RWPE1 (cell line): ENCODE measurements at regions of chr7 and their contacts with region 1.

Region 1: DNA sequence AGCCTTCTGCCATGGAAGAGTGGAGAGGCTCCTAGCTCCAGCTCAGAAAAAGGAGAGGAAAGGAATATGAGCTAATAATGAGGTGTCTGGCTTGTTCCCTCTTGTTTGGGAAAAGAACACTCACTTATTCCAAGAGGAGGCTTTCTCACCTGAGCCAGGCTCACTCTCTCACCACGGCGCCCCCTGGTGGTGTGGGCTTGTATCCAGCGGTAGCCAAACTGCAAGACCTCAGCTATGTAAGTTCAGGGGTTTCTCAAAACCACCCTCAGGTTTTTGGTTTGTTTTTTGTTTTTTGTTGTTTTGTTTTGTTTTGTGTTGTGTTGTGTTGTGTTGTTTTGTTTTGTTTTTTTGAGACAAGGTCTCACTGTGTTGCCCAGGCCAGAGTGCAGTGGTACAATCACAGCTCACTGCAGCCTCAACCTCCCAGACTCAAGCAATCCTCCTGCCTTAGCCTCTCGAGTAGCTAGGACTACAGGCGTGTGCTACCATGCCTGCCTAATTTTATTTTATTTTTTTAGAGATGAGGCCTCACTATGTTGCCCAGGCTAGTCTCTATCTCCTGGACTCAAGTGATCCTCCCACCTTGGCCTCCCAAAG is 124.0 kb downstream of the TMEM130 start:
- DNase-seq: peak; percentile 80
- H3K27ac ChIP-seq: no peak overlapping the region
- CTCF ChIP-seq: peak; percentile 95

Region 2: DNA sequence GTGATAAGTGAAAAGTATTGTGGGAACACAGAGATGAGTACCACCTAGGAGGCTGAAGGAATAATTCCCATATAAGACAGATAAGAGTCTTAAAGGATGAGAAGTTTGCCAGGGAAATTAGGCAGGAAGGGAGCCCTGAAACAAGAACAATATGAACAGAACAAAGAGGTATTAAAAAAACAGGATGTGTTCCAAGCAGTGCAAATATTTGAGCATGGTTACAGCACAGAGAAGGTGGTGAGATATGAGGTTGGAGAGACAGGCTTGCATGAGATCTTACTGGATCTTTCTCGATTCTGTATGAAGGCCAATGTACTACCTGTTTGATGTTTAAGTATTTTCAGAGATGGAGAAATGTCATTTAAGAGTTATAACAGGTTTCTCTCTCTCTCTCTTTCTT is 993.6 kb before region 1 on chr7:
- CTCF ChIA-PET with region 1: no interaction called
- POLR2A ChIA-PET with region 1: no interaction called
- DNase-seq: no peak
- H3K27ac ChIP-seq: no peak overlapping the region
- CTCF ChIP-seq: no peak

Region 3: DNA sequence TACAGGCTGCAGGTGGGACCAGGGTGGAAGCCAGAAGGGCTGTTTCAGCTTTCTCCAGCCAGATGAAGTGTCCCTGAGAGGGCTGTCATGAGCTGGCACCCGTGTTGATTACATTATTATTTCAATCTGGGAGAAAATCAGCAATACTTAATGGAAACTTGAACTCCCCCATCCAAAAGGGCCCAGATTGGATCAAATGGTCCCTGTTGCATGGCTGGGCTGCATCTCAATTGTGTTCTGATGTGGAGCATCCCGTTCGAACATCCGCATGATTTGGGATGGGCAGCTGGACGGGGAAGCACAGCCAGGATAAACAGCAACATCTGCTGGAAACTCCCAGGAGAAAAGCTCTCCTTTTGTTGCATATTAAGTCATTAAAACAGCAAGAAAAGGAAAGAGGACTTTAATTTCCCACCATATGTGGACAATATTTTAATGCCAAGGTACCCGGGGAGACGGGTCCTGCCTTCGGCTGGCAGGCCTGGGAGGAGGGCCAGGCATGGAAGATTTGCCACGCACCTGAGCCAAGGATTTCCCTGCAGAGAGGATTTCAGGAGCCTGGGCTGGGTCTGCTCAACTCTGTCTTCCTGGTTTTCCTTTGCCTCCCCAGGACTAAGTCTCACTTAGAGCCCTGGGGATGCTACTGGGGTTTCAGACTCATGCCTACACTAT is 76.4 kb before region 1 on chr7:
- CTCF ChIA-PET with region 1: no interaction called
- POLR2A ChIA-PET with region 1: no interaction called
- DNase-seq: no peak
- H3K27ac ChIP-seq: no peak overlapping the region
- CTCF ChIP-seq: no peak

Region 4: GRCh38 chr7:98764946-98765345 is 19.1 kb after region 1 on chr7:
- CTCF ChIA-PET with region 1: interaction called, 11 read pairs
- POLR2A ChIA-PET with region 1: no interaction called
- DNase-seq: no peak
- H3K27ac ChIP-seq: no peak overlapping the region
- CTCF ChIP-seq: no peak

Region 5: GRCh38 chr7:98841179-98841997 is 95.6 kb after region 1 on chr7:
- CTCF ChIA-PET with region 1: interaction called, 16 read pairs
- POLR2A ChIA-PET with region 1: no interaction called
- DNase-seq: peak; percentile 65
- H3K27ac ChIP-seq: no peak overlapping the region
- CTCF ChIP-seq: peak; percentile 98

Region 6: DNA sequence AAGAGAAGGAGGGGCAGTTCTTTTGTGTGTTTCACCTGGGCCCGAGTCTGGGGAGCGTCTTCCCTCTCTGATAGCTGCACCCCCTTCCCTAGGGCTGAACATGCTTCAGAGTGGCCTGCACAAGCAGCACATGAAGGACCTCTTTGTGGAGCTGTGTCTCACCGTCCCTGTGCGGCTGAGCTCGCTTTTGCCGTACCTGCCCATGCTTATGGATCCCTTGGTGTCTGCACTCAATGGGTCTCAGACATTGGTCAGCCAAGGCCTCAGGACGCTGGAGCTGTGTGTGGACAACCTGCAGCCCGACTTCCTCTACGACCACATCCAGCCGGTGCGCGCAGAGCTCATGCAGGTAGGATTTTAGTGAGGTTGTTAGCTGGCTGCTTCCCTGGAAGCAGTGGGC is 171.5 kb after region 1 on chr7:
- CTCF ChIA-PET with region 1: no interaction called
- POLR2A ChIA-PET with region 1: no interaction called
- DNase-seq: no peak
- H3K27ac ChIP-seq: no peak overlapping the region
- CTCF ChIP-seq: no peak